Heart right ventricle (tissue), 16 donors: ENCODE measurements at regions of chr5 and their contacts with region 1.

Region 1: GRCh38 chr5:52665559-52665958 is 122.2 kb upstream of the ITGA1 start:
- DNase-seq: peak in 1 of 2 donors; percentile 64
- ATAC-seq: peak in 7 of 8 donors; percentile 59 to 91 (median 83)
- H3K4me3 ChIP-seq: peak overlapping the region in 3 of 10 donors; percentile 5 to 14 (median 8)
- H3K27ac ChIP-seq: peak overlapping the region in 7 of 10 donors; percentile 2 to 71 (median 56)
- H3K4me1 ChIP-seq: peaks cover 0 to 24% (median 11%) of the 10 kb centered on the region in 9 donors
- H3K27me3 ChIP-seq: no peaks in the 10 kb centered on the region
- CTCF ChIP-seq: no peak

Region 2: GRCh38 chr5:52457810-52458209 is 207.7 kb before region 1 on chr5:
- intact Hi-C with region 1: no loop called
- DNase-seq: no peak
- ATAC-seq: no peak
- H3K4me3 ChIP-seq: no peak overlapping the region
- H3K27ac ChIP-seq: no peak overlapping the region
- H3K4me1 ChIP-seq: no peaks in the 10 kb centered on the region
- H3K27me3 ChIP-seq: peaks cover 0 to 6% (median 0%) of the 10 kb centered on the region in 7 donors
- CTCF ChIP-seq: no peak

Region 3: GRCh38 chr5:52648726-52649125 is 16.8 kb before region 1 on chr5:
- intact Hi-C with region 1: no loop called
- DNase-seq: no peak
- ATAC-seq: no peak
- H3K4me3 ChIP-seq: no peak overlapping the region
- H3K27ac ChIP-seq: no peak overlapping the region
- H3K4me1 ChIP-seq: no peaks in the 10 kb centered on the region
- H3K27me3 ChIP-seq: peaks cover 0 to 6% (median 0%) of the 10 kb centered on the region in 7 donors
- CTCF ChIP-seq: no peak

Region 4: GRCh38 chr5:52915176-52915875 is 249.8 kb after region 1 on chr5:
- intact Hi-C with region 1: loop called in 1 of 10 experiments (anchors 10 kb)
- DNase-seq: peak; percentile 8 to 70
- ATAC-seq: peak; percentile 76 to 95 (median 92)
- H3K4me3 ChIP-seq: peak overlapping the region in 6 of 10 donors; percentile 2 to 39 (median 24)
- H3K27ac ChIP-seq: peak overlapping the region in 6 of 10 donors; percentile 1 to 58 (median 28)
- H3K4me1 ChIP-seq: peaks cover 0 to 23% (median 7%) of the 10 kb centered on the region in 9 donors
- H3K27me3 ChIP-seq: no peaks in the 10 kb centered on the region
- CTCF ChIP-seq: peak; percentile 70 to 88 (median 80)

Region 5: DNA sequence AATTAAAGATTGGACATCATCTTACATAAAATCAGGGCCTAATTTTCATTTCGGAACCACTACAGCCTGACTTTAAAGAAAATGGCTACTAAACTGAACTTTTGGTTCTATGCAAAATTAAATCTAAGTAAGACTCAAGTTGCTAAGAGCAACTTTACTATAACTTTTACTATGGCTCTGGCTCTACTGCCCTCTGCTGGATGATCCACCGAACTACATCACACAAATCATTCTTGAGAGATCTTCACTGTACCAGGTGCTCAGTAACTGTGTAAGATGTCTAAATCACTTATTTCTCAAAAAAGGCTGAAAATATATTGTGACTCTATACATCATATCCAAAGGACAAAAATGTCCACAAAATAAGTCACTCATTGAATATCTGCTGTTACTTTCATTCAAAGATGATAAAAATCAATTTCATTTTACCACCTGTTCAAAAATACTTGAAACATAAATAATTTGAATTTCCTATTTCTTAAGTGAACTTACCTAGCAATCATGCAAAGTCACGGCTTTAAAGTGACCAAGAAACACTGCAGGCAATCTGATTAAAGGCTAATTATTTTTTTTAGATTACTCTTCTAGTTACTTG is 430.5 kb after region 1 on chr5:
- intact Hi-C with region 1: loop called in 1 of 10 experiments (anchors 10 kb)
- DNase-seq: peak in 1 of 2 donors; percentile 69
- ATAC-seq: peak; percentile 47 to 88 (median 65)
- H3K4me3 ChIP-seq: no peak overlapping the region
- H3K27ac ChIP-seq: no peak overlapping the region
- H3K4me1 ChIP-seq: peaks cover 0 to 5% (median 0%) of the 10 kb centered on the region in 9 donors
- H3K27me3 ChIP-seq: no peaks in the 10 kb centered on the region
- CTCF ChIP-seq: peak; percentile 78 to 95 (median 87)